ENCODE measurements at regions of chr18 and their contacts with region 1.

Region 1: GRCh38 chr18:54717673-54718407 is 110.4 kb upstream of the RAB27B start:
- DNase-seq: peak; percentile 52
- H3K4me3 Mint-ChIP-seq: peak overlapping the region; percentile 55
- H3K27ac Mint-ChIP-seq: peak overlapping the region; percentile 49
- H3K4me1 Mint-ChIP-seq: peaks cover 55% of the 10 kb centered on the region
- H3K27me3 Mint-ChIP-seq: peaks cover 20% of the 10 kb centered on the region

Region 2: GRCh38 chr18:54261894-54262293 is 455.9 kb before region 1 on chr18:
- intact Hi-C with region 1: loop called (anchors 5 kb)
- DNase-seq: no peak
- H3K4me3 Mint-ChIP-seq: peak overlapping the region; percentile 77
- H3K27ac Mint-ChIP-seq: peak overlapping the region; percentile 94
- H3K4me1 Mint-ChIP-seq: peaks cover 66% of the 10 kb centered on the region
- H3K27me3 Mint-ChIP-seq: no peaks in the 10 kb centered on the region

Region 3: DNA sequence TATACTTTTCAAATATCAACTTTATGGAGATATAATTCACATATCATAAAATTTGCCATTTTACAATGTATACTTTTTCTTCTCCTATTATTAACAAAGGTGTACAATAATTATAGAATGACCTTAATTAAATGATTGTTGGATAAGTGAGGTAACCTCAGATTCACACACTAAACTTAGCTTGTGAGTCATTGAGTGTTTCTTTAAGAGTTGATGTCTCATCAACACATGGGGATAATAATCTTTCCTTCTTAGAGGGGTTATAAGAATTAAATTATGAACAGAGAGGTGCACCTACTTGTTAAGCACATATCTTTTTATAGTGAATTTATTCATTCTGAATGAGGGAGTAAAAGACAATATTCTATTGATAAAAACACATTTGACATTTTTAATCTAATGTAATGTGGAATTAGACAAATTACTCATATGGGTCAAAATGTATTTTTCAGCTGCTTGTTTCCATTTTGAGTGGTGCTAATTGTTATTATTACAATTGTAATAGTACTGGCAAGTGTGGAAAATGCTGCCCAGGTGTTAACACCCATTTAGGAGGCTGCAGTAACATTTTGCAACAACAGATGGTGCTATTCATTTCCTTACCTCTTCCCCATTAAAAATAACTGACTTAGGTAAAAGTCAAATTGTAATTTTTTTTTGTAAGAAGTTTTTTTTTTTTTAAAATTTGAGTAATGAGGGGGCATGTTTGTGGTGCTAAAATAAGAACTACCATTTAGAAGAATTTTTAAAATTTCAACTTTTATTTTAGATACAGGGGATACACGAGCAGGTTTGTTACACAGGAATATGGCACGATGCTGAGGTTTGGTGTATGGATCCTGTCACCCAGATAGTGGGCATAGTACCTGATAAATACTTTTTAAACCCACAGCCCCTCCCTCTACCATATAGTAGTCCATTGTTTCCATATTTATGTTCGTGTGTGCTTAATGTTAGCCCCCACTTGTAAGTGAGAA is 158.9 kb before region 1 on chr18:
- intact Hi-C with region 1: no loop called
- DNase-seq: no peak
- H3K4me3 Mint-ChIP-seq: no peak overlapping the region
- H3K27ac Mint-ChIP-seq: no peak overlapping the region
- H3K4me1 Mint-ChIP-seq: no peaks in the 10 kb centered on the region
- H3K27me3 Mint-ChIP-seq: no peaks in the 10 kb centered on the region

Region 4: GRCh38 chr18:54647176-54647575 is 70.7 kb before region 1 on chr18:
- intact Hi-C with region 1: no loop called
- DNase-seq: no peak
- H3K4me3 Mint-ChIP-seq: no peak overlapping the region
- H3K27ac Mint-ChIP-seq: no peak overlapping the region
- H3K4me1 Mint-ChIP-seq: no peaks in the 10 kb centered on the region
- H3K27me3 Mint-ChIP-seq: peaks cover 11% of the 10 kb centered on the region

Region 5: GRCh38 chr18:54776282-54776977 is 58.6 kb after region 1 on chr18:
- intact Hi-C with region 1: loop called (anchors 1 kb)
- DNase-seq: peak; percentile 14
- H3K4me3 Mint-ChIP-seq: no peak overlapping the region
- H3K27ac Mint-ChIP-seq: peak overlapping the region; percentile 71
- H3K4me1 Mint-ChIP-seq: peaks cover 15% of the 10 kb centered on the region
- H3K27me3 Mint-ChIP-seq: peaks cover 4% of the 10 kb centered on the region

Region 6: DNA sequence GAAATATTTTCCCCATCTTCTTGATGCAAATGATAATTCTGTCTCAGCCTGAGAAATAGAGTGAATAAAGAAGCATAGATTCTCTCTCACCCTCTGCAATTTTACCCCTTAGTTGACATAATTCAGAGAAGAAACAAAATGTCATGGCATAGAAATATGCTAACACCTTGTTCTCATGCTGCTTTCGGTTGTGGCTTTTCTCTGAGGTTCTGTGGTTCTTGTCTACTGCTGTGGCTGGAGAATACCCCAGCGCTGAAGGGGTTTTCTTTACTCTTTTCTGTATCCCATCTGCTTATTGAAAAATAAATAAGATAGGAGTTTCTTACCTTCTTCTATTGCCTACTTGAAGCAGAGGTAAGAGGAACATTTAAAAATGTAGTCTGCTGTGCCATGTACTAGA is 95.0 kb after region 1 on chr18:
- intact Hi-C with region 1: loop called (anchors 1 kb)
- DNase-seq: peak; percentile 32
- H3K4me3 Mint-ChIP-seq: no peak overlapping the region
- H3K27ac Mint-ChIP-seq: no peak overlapping the region
- H3K4me1 Mint-ChIP-seq: peaks cover 18% of the 10 kb centered on the region
- H3K27me3 Mint-ChIP-seq: peaks cover 29% of the 10 kb centered on the region

Region 7: GRCh38 chr18:54852780-54853675 is 135.2 kb after region 1 on chr18:
- intact Hi-C with region 1: loop called (anchors 5 kb)
- DNase-seq: no peak
- H3K4me3 Mint-ChIP-seq: no peak overlapping the region
- H3K27ac Mint-ChIP-seq: no peak overlapping the region
- H3K4me1 Mint-ChIP-seq: peaks cover 19% of the 10 kb centered on the region
- H3K27me3 Mint-ChIP-seq: peaks cover 4% of the 10 kb centered on the region

Region 8: DNA sequence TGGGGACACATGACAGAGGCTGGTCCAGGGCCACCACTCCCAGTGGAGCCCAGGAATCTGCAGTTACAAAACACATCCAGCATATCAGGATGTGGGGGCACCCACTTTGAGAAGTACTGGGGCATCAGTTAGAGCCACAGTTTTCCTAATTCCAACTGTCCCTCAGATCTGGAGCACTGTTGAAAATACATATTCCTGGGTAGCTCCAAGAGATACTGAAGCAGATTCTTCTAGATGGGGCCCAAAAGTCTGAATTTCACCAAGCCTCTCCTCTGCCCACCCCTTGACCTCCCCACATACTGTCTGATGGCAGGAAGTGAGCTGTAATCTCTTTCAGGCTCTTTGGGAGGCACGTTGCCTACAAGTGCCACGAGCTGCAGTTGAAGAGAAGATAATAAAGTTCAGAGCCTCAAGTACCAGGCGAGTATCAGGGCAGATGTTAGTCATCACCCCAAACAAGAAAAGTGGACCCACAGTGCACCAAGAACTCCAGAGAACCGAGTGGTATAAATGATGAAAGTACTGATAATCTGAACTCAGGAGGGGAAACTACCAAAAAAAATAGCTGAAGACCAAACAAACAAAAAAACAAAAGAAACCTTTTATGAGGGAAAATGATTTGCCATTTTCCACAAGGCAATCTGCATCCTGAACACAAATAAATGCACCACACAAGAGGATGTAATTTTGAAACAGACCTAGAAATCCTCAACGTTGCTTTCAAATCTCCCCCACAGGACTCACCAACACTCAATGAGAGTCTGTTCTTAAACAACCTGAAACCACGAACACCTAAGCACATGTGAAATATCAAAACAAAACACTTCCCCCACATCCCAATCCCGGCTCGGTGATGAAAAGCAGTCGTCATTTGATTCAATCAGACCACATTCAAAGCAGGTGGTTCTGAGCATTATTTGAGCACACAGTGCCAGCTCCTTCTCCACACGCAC is 771.5 kb after region 1 on chr18:
- intact Hi-C with region 1: loop called (anchors 10 kb)
- DNase-seq: no peak
- H3K4me3 Mint-ChIP-seq: no peak overlapping the region
- H3K27ac Mint-ChIP-seq: peak overlapping the region; percentile 41
- H3K4me1 Mint-ChIP-seq: peaks cover 9% of the 10 kb centered on the region
- H3K27me3 Mint-ChIP-seq: peaks cover 23% of the 10 kb centered on the region

Measured in activated T-helper 1 cell treated with anti-CD3 and anti-CD28 coated beads, Interleukin-12 subunit alpha, Interleukin-12 subunit beta, Interleukin-2, Interleukin-4 antibody, amounts not matched to agents 30 ng/mL and 10 ng/mL and 1 ng/mL, durations not matched to agents 14 hours and 24 hours and 36 hours (primary cell).